ENCODE measurements at regions of chr14 and their contacts with region 1.

Region 1: GRCh38 chr14:70714055-70714621 is 72.4 kb downstream of the TTC9 start:
- DNase-seq: peak; percentile 50
- ATAC-seq: peak; percentile 63
- H3K4me3 ChIP-seq: no peak overlapping the region; the same call in 1 of the 2 replicates
- H3K27ac ChIP-seq: peak overlapping the region; percentile 52; the same call in 1 of the 2 replicates
- H3K4me1 ChIP-seq: peaks cover 6% of the 10 kb centered on the region
- H3K27me3 ChIP-seq: no peaks in the 10 kb centered on the region
- CTCF ChIP-seq: peak; percentile 42 to 55 (median 51); a peak in 5 of 6 replicates
- EP300 ChIP-seq: no peak
- POLR2A ChIP-seq: no peak
- RAD21 ChIP-seq: peak; percentile 72

Region 2: GRCh38 chr14:70350078-70350477 is 364.1 kb before region 1 on chr14:
- CTCF ChIA-PET with region 1: no interaction called
- POLR2A ChIA-PET with region 1: no interaction called
- RAD21 ChIA-PET with region 1: no interaction called
- SMC1A ChIA-PET with region 1: no interaction called
- in situ Hi-C with region 1: no loop called
- intact Hi-C with region 1: no loop called
- DNase-seq: no peak
- ATAC-seq: no peak
- H3K4me3 ChIP-seq: no peak overlapping the region
- H3K27ac ChIP-seq: no peak overlapping the region
- H3K4me1 ChIP-seq: no peaks in the 10 kb centered on the region
- H3K27me3 ChIP-seq: no peaks in the 10 kb centered on the region
- CTCF ChIP-seq: no peak
- EP300 ChIP-seq: no peak
- POLR2A ChIP-seq: no peak
- RAD21 ChIP-seq: no peak

Region 3: GRCh38 chr14:70622111-70622712 is 91.9 kb before region 1 on chr14:
- CTCF ChIA-PET with region 1: interaction called, 138 read pairs
- POLR2A ChIA-PET with region 1: interaction called, 6 read pairs
- RAD21 ChIA-PET with region 1: interaction called, 58 read pairs
- SMC1A ChIA-PET with region 1: interaction called, 135 read pairs
- in situ Hi-C with region 1: loop called (anchors 5 kb)
- intact Hi-C with region 1: loop called (anchors 1 kb)
- DNase-seq: no peak
- ATAC-seq: peak; percentile 93
- H3K4me3 ChIP-seq: no peak overlapping the region
- H3K27ac ChIP-seq: no peak overlapping the region
- H3K4me1 ChIP-seq: no peaks in the 10 kb centered on the region
- H3K27me3 ChIP-seq: no peaks in the 10 kb centered on the region
- CTCF ChIP-seq: peak; percentile 87 to 91 (median 90)
- EP300 ChIP-seq: no peak
- POLR2A ChIP-seq: no peak
- RAD21 ChIP-seq: peak; percentile 97

Region 4: GRCh38 chr14:70646705-70647104 is 67.4 kb before region 1 on chr14:
- CTCF ChIA-PET with region 1: interaction called, 33 read pairs
- POLR2A ChIA-PET with region 1: interaction called, 9 read pairs
- RAD21 ChIA-PET with region 1: interaction called, 18 read pairs
- SMC1A ChIA-PET with region 1: interaction called, 120 read pairs
- in situ Hi-C with region 1: no loop called
- intact Hi-C with region 1: loop called (anchors 1 kb)
- DNase-seq: no peak
- ATAC-seq: no peak
- H3K4me3 ChIP-seq: peak overlapping the region; percentile 90
- H3K27ac ChIP-seq: peak overlapping the region; percentile 24; the same call in 1 of the 2 replicates
- H3K4me1 ChIP-seq: peaks cover 4% of the 10 kb centered on the region
- H3K27me3 ChIP-seq: no peaks in the 10 kb centered on the region
- CTCF ChIP-seq: no peak
- EP300 ChIP-seq: no peak
- POLR2A ChIP-seq: no peak
- RAD21 ChIP-seq: no peak

Region 5: DNA sequence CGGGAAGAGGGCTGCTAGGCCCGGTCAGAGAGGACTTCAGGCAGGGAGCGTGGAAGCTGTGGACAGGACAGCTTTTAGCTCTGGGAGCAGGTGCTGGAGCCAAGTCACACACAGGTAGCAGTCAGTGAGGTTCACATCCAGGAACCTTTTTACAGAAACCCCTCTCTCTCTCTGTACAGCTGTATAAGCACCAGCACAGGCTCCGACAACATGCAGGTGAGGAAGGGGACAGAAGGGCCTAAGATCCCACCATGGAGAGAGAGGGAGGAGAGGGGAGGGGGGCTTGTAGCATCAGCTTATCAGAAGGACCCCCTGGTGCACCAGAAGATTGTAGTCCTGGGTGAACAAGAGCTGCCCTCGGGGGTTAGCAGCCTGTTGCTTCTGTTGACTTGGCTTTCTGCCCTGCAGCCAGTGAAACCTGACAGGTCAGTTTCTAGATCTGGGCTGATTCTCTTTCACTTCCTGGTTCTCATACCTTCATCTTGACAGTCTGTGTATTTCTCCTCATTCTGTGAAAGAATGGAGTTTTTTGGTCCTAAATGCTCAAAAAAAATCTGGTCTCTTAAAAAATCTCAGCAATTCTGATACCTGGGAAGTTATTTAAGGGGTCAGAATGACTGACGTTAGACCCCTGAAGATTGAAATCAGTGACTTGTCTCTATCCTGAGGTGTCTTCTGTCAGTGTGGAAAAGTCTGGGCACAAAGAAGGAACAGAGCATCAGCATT is 48.8 kb before region 1 on chr14:
- CTCF ChIA-PET with region 1: interaction called, 25 read pairs
- POLR2A ChIA-PET with region 1: interaction called, 10 read pairs
- RAD21 ChIA-PET with region 1: interaction called, 66 read pairs
- SMC1A ChIA-PET with region 1: interaction called, 154 read pairs
- in situ Hi-C with region 1: no loop called
- intact Hi-C with region 1: no loop called
- DNase-seq: peak; percentile 90
- ATAC-seq: peak; percentile 73
- H3K4me3 ChIP-seq: peak overlapping the region; percentile 31; the same call in 1 of the 2 replicates
- H3K27ac ChIP-seq: peak overlapping the region; percentile 89
- H3K4me1 ChIP-seq: peaks cover 87% of the 10 kb centered on the region
- H3K27me3 ChIP-seq: no peaks in the 10 kb centered on the region
- CTCF ChIP-seq: no peak
- EP300 ChIP-seq: peak in 1 of 2 experiments; percentile 72; a peak in 1 of 4 replicates
- POLR2A ChIP-seq: 0 out of 2 replicates have a peak, but pooled peaks have one; percentile 39
- RAD21 ChIP-seq: no peak

Region 6: DNA sequence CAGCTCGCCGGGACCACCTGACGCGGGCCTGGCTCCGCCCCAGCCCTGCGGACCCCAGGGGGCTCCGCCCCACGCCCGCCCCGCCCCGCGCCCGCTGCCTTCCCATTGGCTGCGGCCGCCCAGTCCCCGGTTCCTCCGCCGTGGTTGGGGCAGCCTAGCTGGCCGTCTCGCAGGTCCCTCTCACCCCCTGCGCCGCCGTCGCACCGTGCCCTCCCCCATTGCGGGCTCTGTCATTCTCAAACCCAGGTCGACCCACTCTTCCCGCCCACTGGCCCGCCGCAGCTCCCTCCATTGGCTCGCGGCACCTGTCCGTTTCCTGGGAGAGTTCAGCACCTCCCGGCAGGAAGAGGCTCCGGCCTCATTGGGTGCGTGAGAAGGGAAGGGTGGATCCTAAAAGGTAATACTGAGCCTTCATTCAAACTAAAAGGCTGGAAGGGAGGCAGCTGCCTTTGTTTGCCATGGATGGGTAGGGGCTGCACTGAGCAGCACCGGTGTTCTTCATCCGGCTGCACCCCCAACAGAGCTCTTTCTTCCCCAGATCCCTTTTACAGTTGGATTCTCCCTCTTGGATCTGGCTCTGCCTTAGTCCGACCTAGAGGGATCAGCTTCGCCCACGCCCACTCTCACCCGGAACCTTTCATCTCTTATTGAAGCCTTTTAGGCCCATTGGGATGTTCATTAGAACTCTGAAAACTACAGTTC is 95.6 kb after region 1 on chr14:
- CTCF ChIA-PET with region 1: interaction called, 10 read pairs
- POLR2A ChIA-PET with region 1: interaction called, 3 read pairs
- RAD21 ChIA-PET with region 1: interaction called, 6 read pairs
- SMC1A ChIA-PET with region 1: interaction called, 6 read pairs
- in situ Hi-C with region 1: no loop called
- intact Hi-C with region 1: no loop called
- DNase-seq: peak; percentile 89
- ATAC-seq: peak; percentile 93
- H3K4me3 ChIP-seq: peak overlapping the region; percentile 90
- H3K27ac ChIP-seq: peak overlapping the region; percentile 60
- H3K4me1 ChIP-seq: peaks cover 23% of the 10 kb centered on the region
- H3K27me3 ChIP-seq: no peaks in the 10 kb centered on the region
- CTCF ChIP-seq: no peak
- EP300 ChIP-seq: no peak
- POLR2A ChIP-seq: peak; percentile 52; the same call in 1 of the 2 replicates
- RAD21 ChIP-seq: no peak